ENCODE measurements at regions of chr15 and their contacts with region 1.

Region 1: DNA sequence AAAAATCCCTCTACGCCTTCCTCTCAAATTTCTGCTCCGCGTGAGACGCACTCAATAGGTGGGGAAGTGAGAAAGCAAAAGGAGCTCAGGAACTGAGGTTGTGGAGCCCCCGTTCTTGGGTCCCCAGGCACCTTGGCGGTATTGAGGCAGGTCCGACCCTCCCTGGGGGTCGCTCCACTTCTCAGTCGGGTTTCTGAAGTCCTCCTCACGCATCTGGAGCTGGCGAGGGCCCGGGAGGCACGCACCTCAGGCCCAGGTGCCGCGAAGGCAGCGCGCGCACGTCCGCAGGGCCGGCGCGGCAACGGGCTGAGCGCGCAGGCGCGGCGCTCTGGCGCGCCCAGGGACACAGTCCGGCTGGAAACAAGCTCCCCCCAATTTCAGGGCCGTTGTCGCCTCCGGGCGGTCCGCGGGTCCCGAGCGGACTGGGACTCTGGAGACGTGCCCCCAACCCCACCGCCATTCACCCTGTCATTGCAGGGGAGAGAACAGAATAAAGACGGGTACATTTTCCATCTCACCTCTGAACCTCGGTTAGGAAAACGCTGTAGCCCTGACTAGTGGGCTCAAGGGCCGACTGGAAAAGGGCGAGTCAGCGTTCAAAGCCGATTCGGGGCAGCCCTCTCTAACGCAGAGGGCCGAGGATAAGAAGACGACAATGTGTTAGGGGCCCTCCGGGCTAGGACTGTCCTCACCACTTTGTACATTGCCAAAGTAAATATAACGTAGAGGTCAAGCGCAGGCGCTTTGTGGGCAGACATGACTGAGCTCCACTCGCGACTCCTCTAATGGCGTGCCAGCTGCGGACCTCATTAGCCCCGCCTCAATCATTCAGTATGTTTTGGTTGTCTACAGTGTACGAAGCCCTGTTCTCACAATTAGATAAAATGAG is at the start of gene ZNF770:
- DNase-seq: peak; percentile 47 to 73
- ATAC-seq: peak; percentile 86 to 91
- H3K4me3 ChIP-seq: peak within 1 kb of the TSS; percentile 69 to 96 (median 86)
- H3K27ac ChIP-seq: peak within 1 kb of the TSS; percentile 92 to 97 (median 94)
- H3K4me1 ChIP-seq: peaks cover 27 to 35% of the 10 kb centered on the region in 2 donors
- H3K27me3 ChIP-seq: peaks cover 0 to 6% (median 0%) of the 10 kb centered on the region in 3 donors
- CTCF ChIP-seq: peak in 3 of 5 experiments; percentile 16 to 42 (median 36)
- POLR2A ChIP-seq: peak; percentile 87 to 92
- total RNA-seq, gene ZNF770: 33.2 to 55.2 (median 49.0) TPM

Region 2: DNA sequence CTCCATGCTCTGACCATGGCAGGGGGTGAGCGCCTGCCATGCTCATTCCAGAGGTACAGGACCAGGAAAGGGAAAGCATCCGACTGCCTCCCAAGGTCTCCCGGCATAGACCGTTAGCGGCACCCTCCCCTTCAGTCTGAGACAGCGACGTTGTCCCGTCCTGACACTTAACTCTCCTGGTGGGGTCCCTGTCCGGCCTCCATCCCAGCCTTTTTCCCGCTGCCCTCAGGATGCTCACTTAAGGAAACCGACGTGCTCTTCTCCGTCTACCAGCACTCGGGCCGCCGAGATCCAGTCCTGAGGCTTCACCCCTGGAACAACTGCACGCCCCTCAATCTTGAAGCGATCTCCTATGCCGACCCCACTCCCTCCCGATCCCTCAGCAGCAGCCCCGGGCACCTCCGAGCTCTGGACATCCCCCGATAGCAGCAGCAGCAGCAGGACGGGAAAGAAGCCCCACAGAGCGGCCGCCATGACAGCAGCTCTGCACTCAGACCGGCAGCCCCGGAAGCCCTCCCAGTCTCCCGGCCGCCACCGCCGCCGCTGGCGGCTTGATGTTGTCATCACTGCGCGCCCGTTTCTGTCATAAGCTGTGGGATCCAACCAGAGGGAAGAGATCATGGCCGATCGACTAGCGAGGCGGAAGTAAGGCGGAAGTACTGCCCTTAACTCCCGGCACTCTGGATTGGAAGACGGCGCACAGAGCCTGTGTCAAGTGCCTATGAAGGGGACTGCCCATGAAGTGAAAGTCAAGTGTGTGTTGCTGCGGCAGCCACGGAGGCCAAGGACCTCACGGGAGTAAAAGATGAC is 886.7 kb before region 1 on chr15 and contains the starts of genes EMC7 and PGBD4:
- in situ Hi-C with region 1: no loop called
- intact Hi-C with region 1: loop called (anchors 5 kb)
- DNase-seq: peak; percentile 98 to 99
- ATAC-seq: peak; percentile 100
- H3K4me3 ChIP-seq: peak within 1 kb of the TSS; percentile 71 to 94 (median 88)
- H3K27ac ChIP-seq: peak within 1 kb of the TSS; percentile 83 to 90 (median 88)
- H3K4me1 ChIP-seq: peaks cover 26 to 28% of the 10 kb centered on the region in 2 donors
- H3K27me3 ChIP-seq: no peaks in the 10 kb centered on the region
- CTCF ChIP-seq: peak in 1 of 5 experiments; percentile 27
- POLR2A ChIP-seq: peak; percentile 84 to 89
- total RNA-seq, gene EMC7: 36.6 to 66.8 (median 48.3) TPM
- total RNA-seq, gene PGBD4: 0.73 to 1.9 (median 1.2) TPM

Region 3: DNA sequence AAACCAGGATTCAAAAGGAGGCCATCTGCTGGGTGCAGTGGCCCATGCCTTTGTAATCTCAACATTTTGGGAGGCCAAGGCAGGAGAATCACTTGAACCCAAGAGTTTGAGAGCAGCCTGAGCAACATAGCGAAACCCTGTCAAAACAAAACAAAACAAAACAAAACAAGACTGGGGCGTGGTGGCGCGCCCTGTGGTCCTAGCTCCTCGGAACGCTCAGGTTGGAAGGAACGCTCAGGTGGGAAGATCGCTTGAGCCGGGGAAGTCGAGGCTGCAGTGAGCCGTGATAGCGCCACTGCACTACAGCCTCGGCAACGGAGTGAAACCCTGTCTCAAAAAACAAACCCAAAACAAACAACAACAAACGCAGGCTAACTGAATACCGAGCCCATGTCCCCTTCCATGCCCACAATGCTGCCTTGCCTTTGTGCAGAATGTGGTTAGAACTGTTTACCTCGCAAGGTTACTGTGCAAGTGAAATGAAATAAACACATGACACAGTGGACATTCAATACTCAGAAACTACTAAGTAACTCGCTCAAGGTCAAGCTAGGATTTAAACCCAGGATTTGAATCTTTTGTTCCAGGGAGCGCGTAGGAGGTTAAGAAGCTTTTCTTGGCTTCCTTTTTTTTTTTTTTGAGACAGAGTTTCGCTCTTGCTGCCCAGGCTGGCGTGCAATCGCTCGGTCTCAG is 764.2 kb before region 1 on chr15:
- in situ Hi-C with region 1: loop called in 2 of 4 experiments (anchors 25 kb)
- intact Hi-C with region 1: loop called (anchors 5 kb)
- DNase-seq: no peak
- ATAC-seq: peak; percentile 34 to 45
- H3K4me3 ChIP-seq: peak overlapping the region; percentile 75 to 93 (median 86)
- H3K27ac ChIP-seq: peak overlapping the region; percentile 83 to 96 (median 87)
- H3K4me1 ChIP-seq: peaks cover 14 to 15% of the 10 kb centered on the region in 2 donors
- H3K27me3 ChIP-seq: no peaks in the 10 kb centered on the region
- CTCF ChIP-seq: no peak
- POLR2A ChIP-seq: no peak

Region 4: GRCh38 chr15:34367101-34368081 is 620.8 kb before region 1 on chr15 and contains the start of gene LPCAT4:
- in situ Hi-C with region 1: loop called in 1 of 4 experiments (anchors 25 kb)
- intact Hi-C with region 1: no loop called
- DNase-seq: peak; percentile 76 to 82
- ATAC-seq: peak; percentile 91 to 92
- H3K4me3 ChIP-seq: peak within 1 kb of the TSS; percentile 88 to 98 (median 92)
- H3K27ac ChIP-seq: peak within 1 kb of the TSS; percentile 92 to 99 (median 96)
- H3K4me1 ChIP-seq: peaks cover 14 to 21% of the 10 kb centered on the region in 2 donors
- H3K27me3 ChIP-seq: no peaks in the 10 kb centered on the region
- CTCF ChIP-seq: peak; percentile 88 to 98 (median 97)
- POLR2A ChIP-seq: peak; percentile 56 to 59
- total RNA-seq, gene LPCAT4: 1.7 to 7.4 (median 4.0) TPM

Region 5: GRCh38 chr15:34969340-34970097 is 18.7 kb before region 1 on chr15 and contains the start of gene AQR:
- in situ Hi-C with region 1: no loop called
- intact Hi-C with region 1: loop called (anchors 1 kb)
- DNase-seq: peak; percentile 95 to 96
- ATAC-seq: peak; percentile 100
- H3K4me3 ChIP-seq: peak within 1 kb of the TSS; percentile 79 to 96 (median 91)
- H3K27ac ChIP-seq: peak within 1 kb of the TSS; percentile 85 to 91 (median 88)
- H3K4me1 ChIP-seq: peaks cover 27 to 28% of the 10 kb centered on the region in 2 donors
- H3K27me3 ChIP-seq: no peaks in the 10 kb centered on the region
- CTCF ChIP-seq: peak; percentile 63 to 97 (median 88)
- POLR2A ChIP-seq: peak; percentile 53 to 66
- total RNA-seq, gene AQR: 6.3 to 13.1 (median 10.3) TPM